CD4-positive, alpha-beta memory T cell (primary cell): ENCODE measurements at regions of chr1 and their contacts with region 1.

Region 1: DNA sequence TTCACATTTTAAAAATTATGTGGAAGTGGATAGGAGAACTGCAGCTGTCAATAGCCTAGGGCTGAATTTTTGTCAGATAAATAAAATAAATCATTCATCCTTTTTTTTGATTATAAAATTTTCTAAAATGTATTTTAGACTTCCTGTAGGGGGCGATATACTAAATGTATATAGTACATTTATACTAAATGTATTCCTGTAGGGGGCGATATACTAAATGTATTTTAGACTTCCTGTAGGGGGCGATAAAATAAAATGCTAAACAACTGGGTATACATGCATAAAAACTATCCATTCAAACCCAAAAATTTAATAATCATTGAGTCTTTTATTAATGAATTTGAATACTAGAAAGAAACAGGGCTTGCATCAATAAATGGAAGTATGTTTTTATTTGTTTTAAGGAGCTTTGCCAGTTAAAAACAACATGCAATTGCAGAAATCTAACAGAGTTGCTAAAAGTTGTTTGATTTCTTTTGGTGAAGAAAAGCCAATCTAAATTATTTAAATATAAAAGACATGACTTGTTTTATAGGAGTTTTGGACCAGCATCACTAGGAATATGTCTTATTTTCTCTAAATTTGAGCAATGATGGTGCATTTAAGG is 31.4 kb downstream of the CLCA1 start:
- DNase-seq: peak in 4 of 5 donors; percentile 66 to 72 (median 69)
- H3K4me3 ChIP-seq: no peak overlapping the region
- H3K4me3 Mint-ChIP-seq: no peak overlapping the region
- H3K27ac ChIP-seq: no peak overlapping the region
- H3K27ac Mint-ChIP-seq: peak overlapping the region in 2 of 7 donors; percentile 7 to 37
- H3K4me1 ChIP-seq: no peaks in the 10 kb centered on the region
- H3K4me1 Mint-ChIP-seq: peaks cover 3 to 22% (median 5%) of the 10 kb centered on the region in 4 donors
- H3K27me3 ChIP-seq: no peaks in the 10 kb centered on the region
- H3K27me3 Mint-ChIP-seq: peaks cover 10% of the 10 kb centered on the region in 2 donors

Region 2: DNA sequence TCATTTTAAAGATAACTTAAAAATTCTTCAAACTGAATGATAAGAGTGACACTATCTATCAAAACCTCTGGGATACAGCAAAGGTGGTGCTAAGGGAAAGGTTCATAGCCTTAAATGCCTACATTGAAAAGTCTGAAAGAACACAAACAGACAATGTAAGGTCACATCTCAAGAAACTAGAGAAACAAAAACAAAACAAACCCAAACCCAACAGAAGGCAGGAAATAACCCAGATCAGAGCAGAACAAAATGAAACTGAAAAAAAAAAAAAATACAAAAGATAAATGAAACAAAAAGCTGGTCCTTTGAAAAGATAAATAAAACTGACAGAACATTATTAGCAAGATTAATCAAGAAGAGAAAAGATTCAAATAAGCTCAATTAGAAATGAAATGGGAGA is 110.8 kb before region 1 on chr1:
- CTCF ChIA-PET with region 1: interaction called, 117 read pairs
- POLR2A ChIA-PET with region 1: interaction called, 5 read pairs
- intact Hi-C with region 1: no loop called
- DNase-seq: peak in 4 of 5 donors; percentile 51 to 66 (median 55)
- H3K4me3 ChIP-seq: peak overlapping the region; percentile 9 to 12
- H3K4me3 Mint-ChIP-seq: peak overlapping the region; percentile 59 to 88 (median 83)
- H3K27ac ChIP-seq: peak overlapping the region; percentile 39
- H3K27ac Mint-ChIP-seq: peak overlapping the region; percentile 82 to 98 (median 93)
- H3K4me1 ChIP-seq: peaks cover 67% of the 10 kb centered on the region
- H3K4me1 Mint-ChIP-seq: peaks cover 45 to 68% (median 50%) of the 10 kb centered on the region in 4 donors
- H3K27me3 ChIP-seq: no peaks in the 10 kb centered on the region
- H3K27me3 Mint-ChIP-seq: no peaks in the 10 kb centered on the region

Region 3: GRCh38 chr1:86419277-86419903 is 80.7 kb before region 1 on chr1:
- CTCF ChIA-PET with region 1: interaction called, 7 read pairs
- POLR2A ChIA-PET with region 1: no interaction called
- intact Hi-C with region 1: loop called (anchors 1 kb)
- DNase-seq: peak; percentile 47 to 62 (median 52)
- H3K4me3 ChIP-seq: no peak overlapping the region
- H3K4me3 Mint-ChIP-seq: peak overlapping the region; percentile 57 to 86 (median 72)
- H3K27ac ChIP-seq: no peak overlapping the region
- H3K27ac Mint-ChIP-seq: peak overlapping the region in 3 of 7 donors; percentile 53 to 83 (median 78)
- H3K4me1 ChIP-seq: no peaks in the 10 kb centered on the region
- H3K4me1 Mint-ChIP-seq: peaks cover 2 to 6% (median 4%) of the 10 kb centered on the region in 4 donors
- H3K27me3 ChIP-seq: no peaks in the 10 kb centered on the region
- H3K27me3 Mint-ChIP-seq: peaks cover 2 to 9% of the 10 kb centered on the region in 2 donors

Region 4: DNA sequence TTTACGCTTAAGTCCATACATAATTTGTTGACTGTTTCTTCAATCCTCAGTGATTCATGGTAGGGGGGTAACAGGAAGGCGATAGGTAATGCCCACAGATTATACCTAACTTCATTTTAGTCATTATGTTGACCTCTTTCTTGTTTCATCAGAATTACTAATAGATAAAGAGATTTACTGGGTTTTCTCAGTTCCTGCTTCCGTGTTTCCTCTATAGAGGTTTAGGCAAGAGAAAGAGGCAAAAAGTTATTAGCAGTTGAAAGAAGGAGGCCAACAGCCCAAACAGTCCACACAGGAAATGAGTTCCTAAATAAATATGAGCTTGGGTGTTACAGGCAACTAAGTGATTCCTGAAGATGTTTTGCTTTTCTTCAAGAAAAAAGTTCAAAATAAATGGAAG is 49.2 kb before region 1 on chr1:
- CTCF ChIA-PET with region 1: interaction called, 11 read pairs
- POLR2A ChIA-PET with region 1: no interaction called
- intact Hi-C with region 1: no loop called
- DNase-seq: no peak
- H3K4me3 ChIP-seq: no peak overlapping the region
- H3K4me3 Mint-ChIP-seq: no peak overlapping the region
- H3K27ac ChIP-seq: no peak overlapping the region
- H3K27ac Mint-ChIP-seq: no peak overlapping the region
- H3K4me1 ChIP-seq: no peaks in the 10 kb centered on the region
- H3K4me1 Mint-ChIP-seq: peaks cover 0 to 2% (median 0%) of the 10 kb centered on the region in 4 donors
- H3K27me3 ChIP-seq: no peaks in the 10 kb centered on the region
- H3K27me3 Mint-ChIP-seq: peaks cover 0 to 3% of the 10 kb centered on the region in 2 donors

Region 5: DNA sequence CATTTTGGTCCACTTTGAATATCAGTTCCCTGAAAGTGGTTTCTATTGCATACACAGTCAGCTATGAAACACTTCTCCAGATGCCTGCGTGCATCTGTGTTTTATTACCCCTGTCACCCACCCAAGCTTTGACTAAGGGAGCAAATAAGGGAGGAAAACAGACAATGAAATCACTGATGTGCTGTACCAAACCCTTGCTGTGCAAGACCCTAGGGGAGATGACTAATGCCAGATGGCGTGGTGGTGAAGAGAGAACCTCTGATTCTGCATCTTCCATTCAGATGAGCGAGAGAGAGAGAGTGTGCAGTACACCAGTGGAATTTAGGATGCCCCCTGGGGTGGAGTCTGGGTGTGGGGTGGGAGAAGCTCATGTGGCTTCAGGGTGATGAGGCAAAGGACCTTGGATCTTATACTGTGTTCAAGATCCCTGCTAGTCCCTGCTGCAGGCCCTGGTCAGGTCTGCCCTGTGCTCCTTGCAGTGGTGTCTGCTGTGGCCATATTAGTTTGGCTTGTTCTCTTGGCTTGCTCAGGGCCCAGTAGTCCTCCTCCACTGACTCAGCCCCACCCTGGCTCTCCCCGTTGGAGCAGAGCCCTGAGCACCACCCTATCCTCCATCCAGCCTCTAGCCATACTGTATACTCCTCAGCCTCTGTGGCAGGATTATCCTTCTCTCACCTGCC is 12.8 kb before region 1 on chr1:
- CTCF ChIA-PET with region 1: interaction called, 25 read pairs
- POLR2A ChIA-PET with region 1: no interaction called
- intact Hi-C with region 1: no loop called
- DNase-seq: no peak
- H3K4me3 ChIP-seq: no peak overlapping the region
- H3K4me3 Mint-ChIP-seq: no peak overlapping the region
- H3K27ac ChIP-seq: no peak overlapping the region
- H3K27ac Mint-ChIP-seq: no peak overlapping the region
- H3K4me1 ChIP-seq: no peaks in the 10 kb centered on the region
- H3K4me1 Mint-ChIP-seq: no peaks in the 10 kb centered on the region
- H3K27me3 ChIP-seq: no peaks in the 10 kb centered on the region
- H3K27me3 Mint-ChIP-seq: peaks cover 1 to 3% of the 10 kb centered on the region in 2 donors

Region 6: GRCh38 chr1:86741947-86742572 is 242.0 kb after region 1 on chr1:
- CTCF ChIA-PET with region 1: interaction called, 14 read pairs
- POLR2A ChIA-PET with region 1: no interaction called
- intact Hi-C with region 1: loop called (anchors 1 kb)
- DNase-seq: peak; percentile 11 to 55 (median 40)
- H3K4me3 ChIP-seq: no peak overlapping the region
- H3K4me3 Mint-ChIP-seq: no peak overlapping the region
- H3K27ac ChIP-seq: no peak overlapping the region
- H3K27ac Mint-ChIP-seq: no peak overlapping the region
- H3K4me1 ChIP-seq: peaks cover 24% of the 10 kb centered on the region
- H3K4me1 Mint-ChIP-seq: peaks cover 2 to 4% (median 4%) of the 10 kb centered on the region in 4 donors
- H3K27me3 ChIP-seq: no peaks in the 10 kb centered on the region
- H3K27me3 Mint-ChIP-seq: no peaks in the 10 kb centered on the region

Region 7: DNA sequence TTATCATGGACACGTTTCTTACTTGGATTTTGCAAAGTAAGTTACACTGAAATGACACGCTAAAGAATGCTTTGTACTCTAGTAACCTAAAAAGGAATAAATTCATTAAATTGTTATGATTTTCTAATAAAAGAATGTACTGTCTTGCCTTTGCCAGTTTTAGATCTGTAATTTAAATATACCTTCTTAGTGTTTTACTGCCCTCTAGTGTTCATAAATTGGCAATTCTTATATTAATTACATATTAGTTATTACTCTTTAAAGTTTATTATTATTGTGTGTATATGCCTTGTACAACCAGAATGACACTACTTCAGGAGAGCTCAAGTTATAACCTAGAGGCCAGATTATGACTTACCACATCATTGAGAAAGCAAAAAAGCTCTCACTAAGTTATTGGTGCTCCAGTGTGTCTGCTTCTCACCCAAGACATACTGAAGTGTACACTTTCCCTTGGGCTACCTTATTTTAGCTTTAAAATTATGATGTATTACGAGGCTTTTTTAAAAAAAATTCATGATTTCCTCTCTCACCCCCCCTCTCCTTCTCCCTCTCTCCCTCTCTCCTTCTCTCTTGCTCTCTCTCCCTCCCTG is 584.2 kb after region 1 on chr1:
- CTCF ChIA-PET with region 1: interaction called, 3 read pairs
- POLR2A ChIA-PET with region 1: no interaction called
- intact Hi-C with region 1: loop called (anchors 1 kb)
- DNase-seq: peak in 4 of 5 donors; percentile 43 to 46 (median 44)
- H3K4me3 ChIP-seq: no peak overlapping the region
- H3K4me3 Mint-ChIP-seq: no peak overlapping the region
- H3K27ac ChIP-seq: no peak overlapping the region
- H3K27ac Mint-ChIP-seq: no peak overlapping the region
- H3K4me1 ChIP-seq: no peaks in the 10 kb centered on the region
- H3K4me1 Mint-ChIP-seq: peaks cover 0 to 3% (median 1%) of the 10 kb centered on the region in 4 donors
- H3K27me3 ChIP-seq: no peaks in the 10 kb centered on the region
- H3K27me3 Mint-ChIP-seq: no peaks in the 10 kb centered on the region